ENCODE measurements at regions of chr17 and their contacts with region 1.

Region 1: DNA sequence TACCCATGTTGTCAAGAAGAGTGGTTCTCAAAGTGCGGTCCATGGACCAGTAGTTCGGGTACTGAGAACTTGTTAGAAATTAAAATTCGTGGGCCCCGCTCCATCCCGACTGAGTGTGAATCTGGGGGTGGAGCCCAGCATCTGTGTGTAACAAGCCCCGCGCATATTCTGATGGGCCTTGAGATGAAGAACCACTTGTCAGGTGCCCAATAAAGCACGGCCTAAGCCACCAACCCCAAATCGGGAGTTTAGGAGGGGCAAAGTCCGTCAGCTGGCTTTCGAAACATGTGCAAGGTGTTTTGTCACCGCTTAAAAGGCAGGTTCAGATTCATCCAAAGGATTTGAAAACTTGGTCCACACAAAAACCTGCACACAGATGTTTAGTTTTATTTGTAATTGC is 29.5 kb downstream of the PSMD12 start:
- DNase-seq: no peak
- ATAC-seq: no peak
- H3K4me3 ChIP-seq: no peak overlapping the region
- H3K27ac ChIP-seq: no peak overlapping the region
- H3K4me1 ChIP-seq: peaks cover 14% of the 10 kb centered on the region
- H3K27me3 ChIP-seq: no peaks in the 10 kb centered on the region
- CTCF ChIP-seq: no peak

Region 2: GRCh38 chr17:67276075-67276474 is 60.8 kb before region 1 on chr17:
- CTCF ChIA-PET with region 1: interaction called, 5 read pairs
- POLR2A ChIA-PET with region 1: no interaction called
- intact Hi-C with region 1: loop called (anchors 5 kb)
- DNase-seq: peak; percentile 65
- ATAC-seq: peak; percentile 84
- H3K4me3 ChIP-seq: no peak overlapping the region
- H3K27ac ChIP-seq: no peak overlapping the region
- H3K4me1 ChIP-seq: no peaks in the 10 kb centered on the region
- H3K27me3 ChIP-seq: no peaks in the 10 kb centered on the region
- CTCF ChIP-seq: peak; percentile 60